IMR-90 (cell line): ENCODE measurements at regions of chr4 and their contacts with region 1.

Region 1: DNA sequence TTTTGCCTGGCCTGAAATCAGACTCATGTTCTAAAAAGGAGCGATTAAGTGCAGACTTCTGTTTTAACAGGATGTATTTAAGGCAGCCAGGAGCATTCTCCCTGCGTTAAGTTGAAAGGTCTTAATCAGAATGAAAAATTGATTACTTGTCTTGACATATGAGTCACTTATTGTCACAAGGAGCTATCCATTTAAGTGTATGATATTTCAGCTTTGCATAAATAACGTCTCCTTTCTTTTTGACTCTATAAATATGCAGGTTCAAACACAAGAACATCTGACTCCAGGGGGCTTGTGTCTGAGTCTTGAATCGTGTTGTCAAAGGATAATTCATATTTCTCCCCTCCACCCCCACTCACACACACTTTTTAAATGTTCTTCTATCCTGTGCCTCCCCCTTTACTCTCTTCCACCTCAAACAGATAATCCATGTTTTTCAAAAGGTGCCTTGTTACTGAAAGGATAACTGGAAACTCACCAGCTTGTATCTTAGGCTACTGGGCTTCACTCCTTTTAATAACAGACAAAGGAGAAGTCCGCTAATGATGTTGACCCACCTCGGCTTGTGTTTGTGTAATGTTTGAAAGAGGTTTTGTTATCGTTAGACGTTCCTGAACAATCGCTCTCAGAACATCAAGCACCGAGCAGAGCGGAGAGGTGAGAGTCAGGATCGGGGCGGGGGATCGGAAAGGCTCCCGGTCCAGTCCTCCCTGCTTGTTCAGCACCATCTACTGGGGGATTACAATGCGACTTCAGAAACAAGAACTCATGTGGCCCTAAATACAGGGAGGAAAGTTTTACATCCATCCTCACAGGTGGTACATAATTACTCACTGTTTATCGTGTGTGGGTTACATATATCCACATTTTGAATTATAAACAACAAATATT is 107.5 kb upstream of the RPL34 start:
- DNase-seq: peak; percentile 66
- ATAC-seq: peak; percentile 90
- H3K4me3 ChIP-seq: no peak overlapping the region
- H3K27ac ChIP-seq: no peak overlapping the region
- H3K4me1 ChIP-seq: no peaks in the 10 kb centered on the region
- H3K27me3 ChIP-seq: peaks cover 12% of the 10 kb centered on the region
- CTCF ChIP-seq: peak; percentile 56
- POLR2A ChIP-seq: no peak
- RAD21 ChIP-seq: peak; percentile 66

Region 2: GRCh38 chr4:108018040-108018883 is 494.6 kb before region 1 on chr4:
- CTCF ChIA-PET with region 1: no interaction called
- POLR2A ChIA-PET with region 1: no interaction called
- dilution Hi-C with region 1: no loop called
- in situ Hi-C with region 1: no loop called
- intact Hi-C with region 1: loop called (anchors 5 kb)
- DNase-seq: peak; percentile 77
- ATAC-seq: peak; percentile 93
- H3K4me3 ChIP-seq: no peak overlapping the region
- H3K27ac ChIP-seq: no peak overlapping the region
- H3K4me1 ChIP-seq: no peaks in the 10 kb centered on the region
- H3K27me3 ChIP-seq: no peaks in the 10 kb centered on the region
- CTCF ChIP-seq: peak; percentile 84
- POLR2A ChIP-seq: no peak
- RAD21 ChIP-seq: peak; percentile 87

Region 3: GRCh38 chr4:108030332-108030731 is 482.5 kb before region 1 on chr4:
- CTCF ChIA-PET with region 1: no interaction called
- POLR2A ChIA-PET with region 1: no interaction called
- dilution Hi-C with region 1: no loop called
- in situ Hi-C with region 1: no loop called
- intact Hi-C with region 1: loop called (anchors 1 kb)
- DNase-seq: peak; percentile 76
- ATAC-seq: peak; percentile 95
- H3K4me3 ChIP-seq: no peak overlapping the region
- H3K27ac ChIP-seq: no peak overlapping the region
- H3K4me1 ChIP-seq: peaks cover 3% of the 10 kb centered on the region; the same call in 1 of the 2 replicates
- H3K27me3 ChIP-seq: no peaks in the 10 kb centered on the region
- CTCF ChIP-seq: peak; percentile 71
- POLR2A ChIP-seq: no peak
- RAD21 ChIP-seq: peak; percentile 76

Region 4: DNA sequence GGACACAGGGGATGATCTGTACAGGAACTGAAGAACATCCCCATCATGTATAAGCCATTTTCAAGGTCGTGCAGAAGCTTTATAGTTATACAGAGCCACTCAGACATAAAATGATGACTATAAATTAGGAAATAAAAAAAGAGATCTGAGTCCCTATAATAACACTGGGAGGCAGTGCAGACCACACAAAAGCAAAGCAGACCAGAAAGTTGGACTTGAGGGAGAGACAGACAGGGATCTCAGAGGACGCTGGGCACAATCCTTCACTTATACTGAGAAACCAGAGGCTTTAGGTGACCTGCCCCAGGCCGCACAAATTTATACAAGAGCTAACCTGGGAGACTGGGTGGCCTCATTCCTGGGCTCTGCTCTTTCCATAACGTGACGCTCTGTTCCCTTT is 452.7 kb before region 1 on chr4:
- CTCF ChIA-PET with region 1: no interaction called
- POLR2A ChIA-PET with region 1: no interaction called
- dilution Hi-C with region 1: no loop called
- in situ Hi-C with region 1: no loop called
- intact Hi-C with region 1: loop called (anchors 1 kb)
- DNase-seq: peak; percentile 46
- ATAC-seq: peak; percentile 70
- H3K4me3 ChIP-seq: no peak overlapping the region
- H3K27ac ChIP-seq: no peak overlapping the region
- H3K4me1 ChIP-seq: peaks cover 3% of the 10 kb centered on the region
- H3K27me3 ChIP-seq: no peaks in the 10 kb centered on the region; the same call in 1 of the 2 replicates
- CTCF ChIP-seq: peak; percentile 50
- POLR2A ChIP-seq: no peak
- RAD21 ChIP-seq: peak; percentile 50

Region 5: DNA sequence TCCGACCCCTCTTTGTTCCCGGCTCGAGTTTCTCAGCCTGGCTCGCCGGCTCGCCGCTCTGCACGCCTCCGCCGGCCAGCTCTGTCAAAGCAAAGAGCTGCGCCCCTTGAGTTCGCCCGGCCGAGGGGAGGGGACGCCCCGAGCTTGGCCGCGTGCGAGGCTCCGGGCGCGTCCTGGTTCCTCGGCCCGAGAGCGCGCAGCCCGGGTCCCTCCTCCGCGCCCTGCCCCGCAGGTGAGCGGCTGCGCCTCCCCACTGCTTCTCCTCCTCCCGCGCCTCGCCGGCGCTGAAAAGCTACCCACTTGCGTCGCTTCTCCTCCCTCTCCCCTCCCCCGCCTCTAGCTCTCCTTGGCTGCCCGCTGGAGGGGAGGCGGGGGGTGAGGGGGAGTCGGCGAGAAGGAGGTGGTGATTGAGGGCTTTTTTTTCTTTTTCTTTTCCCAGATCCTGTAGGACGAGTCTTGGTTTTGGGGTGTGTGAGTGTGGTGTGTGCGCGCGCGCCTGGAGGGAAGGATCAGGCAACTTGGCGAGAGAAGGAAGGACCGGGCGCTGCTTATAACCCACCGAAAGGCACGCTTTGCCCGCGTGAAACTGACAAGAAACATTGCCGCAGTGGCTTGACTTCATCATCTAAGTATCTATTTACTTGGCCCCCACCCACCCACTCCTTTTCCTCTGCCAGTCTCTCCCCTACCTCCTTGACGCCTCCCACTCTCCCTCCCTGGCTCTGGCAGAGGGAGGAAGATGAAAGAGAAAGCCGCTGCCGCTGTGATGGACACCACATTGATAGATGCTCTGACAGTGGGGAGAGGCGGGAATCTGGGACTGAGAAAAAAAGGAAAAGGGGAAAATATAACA is 344.0 kb before region 1 on chr4 and contains the start of gene LEF1:
- CTCF ChIA-PET with region 1: no interaction called
- POLR2A ChIA-PET with region 1: no interaction called
- dilution Hi-C with region 1: no loop called
- in situ Hi-C with region 1: no loop called
- intact Hi-C with region 1: loop called (anchors 5 kb)
- DNase-seq: peak; percentile 11
- ATAC-seq: peak; percentile 48
- H3K4me3 ChIP-seq: peak within 1 kb of the TSS; percentile 53
- H3K27ac ChIP-seq: no peak within 1 kb of the TSS
- H3K4me1 ChIP-seq: peaks cover 2% of the 10 kb centered on the region; the same call in 1 of the 2 replicates
- H3K27me3 ChIP-seq: peaks cover 84% of the 10 kb centered on the region
- CTCF ChIP-seq: no peak
- POLR2A ChIP-seq: no peak
- RAD21 ChIP-seq: no peak
- total RNA-seq, gene LEF1: 0.56 and 1.8 TPM in 2 replicates

Region 6: GRCh38 chr4:108751321-108751720 is 238.5 kb after region 1 on chr4:
- CTCF ChIA-PET with region 1: no interaction called
- POLR2A ChIA-PET with region 1: no interaction called
- dilution Hi-C with region 1: no loop called
- in situ Hi-C with region 1: no loop called
- intact Hi-C with region 1: no loop called
- DNase-seq: no peak
- ATAC-seq: no peak
- H3K4me3 ChIP-seq: no peak overlapping the region
- H3K27ac ChIP-seq: no peak overlapping the region
- H3K4me1 ChIP-seq: no peaks in the 10 kb centered on the region
- H3K27me3 ChIP-seq: no peaks in the 10 kb centered on the region
- CTCF ChIP-seq: no peak
- POLR2A ChIP-seq: no peak
- RAD21 ChIP-seq: no peak